ENCODE measurements at regions of chr6 and their contacts with region 1.

Region 1: GRCh38 chr6:125944434-125944816 is 12.1 kb upstream of the HINT3 start:
- DNase-seq: no peak
- H3K4me3 Mint-ChIP-seq: no peak overlapping the region
- H3K27ac Mint-ChIP-seq: no peak overlapping the region
- H3K4me1 Mint-ChIP-seq: peaks cover 22% of the 10 kb centered on the region
- H3K27me3 Mint-ChIP-seq: peaks cover 3% of the 10 kb centered on the region

Region 2: GRCh38 chr6:125931733-125932450 is 12.5 kb before region 1 on chr6:
- intact Hi-C with region 1: loop called (anchors 2 kb)
- DNase-seq: no peak
- H3K4me3 Mint-ChIP-seq: no peak overlapping the region
- H3K27ac Mint-ChIP-seq: peak overlapping the region; percentile 85
- H3K4me1 Mint-ChIP-seq: peaks cover 16% of the 10 kb centered on the region
- H3K27me3 Mint-ChIP-seq: no peaks in the 10 kb centered on the region

Region 3: DNA sequence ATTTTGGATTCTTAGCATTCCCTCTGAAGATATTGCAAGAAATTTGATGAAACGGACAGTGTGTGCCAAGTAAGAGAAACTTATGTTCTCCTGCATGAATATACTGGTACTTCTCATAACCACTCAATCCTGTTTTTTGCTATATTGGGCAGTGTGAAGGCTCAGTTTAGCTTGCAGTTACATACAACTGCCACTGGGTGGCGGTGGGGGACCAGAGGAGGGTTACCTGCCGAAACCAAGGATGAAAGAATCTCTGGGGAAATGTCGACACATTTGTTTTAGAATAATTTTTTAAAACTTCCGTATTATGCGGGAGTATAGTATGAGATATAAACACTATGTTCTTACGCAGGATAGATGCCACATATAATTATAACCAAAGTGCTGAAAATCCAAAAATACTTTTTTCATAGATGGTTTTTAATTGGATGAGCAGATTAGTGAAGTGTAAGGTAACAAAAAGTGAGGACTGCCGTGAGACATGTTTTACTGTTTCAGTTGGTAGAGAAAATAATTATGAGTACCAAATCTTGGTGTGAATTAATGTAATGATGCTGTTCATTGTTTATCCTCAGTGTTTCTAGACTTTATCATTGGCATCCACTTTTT is 51.7 kb after region 1 on chr6:
- intact Hi-C with region 1: no loop called
- DNase-seq: peak; percentile 51
- H3K4me3 Mint-ChIP-seq: peak overlapping the region; percentile 58
- H3K27ac Mint-ChIP-seq: no peak overlapping the region
- H3K4me1 Mint-ChIP-seq: peaks cover 11% of the 10 kb centered on the region
- H3K27me3 Mint-ChIP-seq: no peaks in the 10 kb centered on the region